MCF 10A (cell line): ENCODE measurements at regions of chr16 and their contacts with region 1.

Region 1: DNA sequence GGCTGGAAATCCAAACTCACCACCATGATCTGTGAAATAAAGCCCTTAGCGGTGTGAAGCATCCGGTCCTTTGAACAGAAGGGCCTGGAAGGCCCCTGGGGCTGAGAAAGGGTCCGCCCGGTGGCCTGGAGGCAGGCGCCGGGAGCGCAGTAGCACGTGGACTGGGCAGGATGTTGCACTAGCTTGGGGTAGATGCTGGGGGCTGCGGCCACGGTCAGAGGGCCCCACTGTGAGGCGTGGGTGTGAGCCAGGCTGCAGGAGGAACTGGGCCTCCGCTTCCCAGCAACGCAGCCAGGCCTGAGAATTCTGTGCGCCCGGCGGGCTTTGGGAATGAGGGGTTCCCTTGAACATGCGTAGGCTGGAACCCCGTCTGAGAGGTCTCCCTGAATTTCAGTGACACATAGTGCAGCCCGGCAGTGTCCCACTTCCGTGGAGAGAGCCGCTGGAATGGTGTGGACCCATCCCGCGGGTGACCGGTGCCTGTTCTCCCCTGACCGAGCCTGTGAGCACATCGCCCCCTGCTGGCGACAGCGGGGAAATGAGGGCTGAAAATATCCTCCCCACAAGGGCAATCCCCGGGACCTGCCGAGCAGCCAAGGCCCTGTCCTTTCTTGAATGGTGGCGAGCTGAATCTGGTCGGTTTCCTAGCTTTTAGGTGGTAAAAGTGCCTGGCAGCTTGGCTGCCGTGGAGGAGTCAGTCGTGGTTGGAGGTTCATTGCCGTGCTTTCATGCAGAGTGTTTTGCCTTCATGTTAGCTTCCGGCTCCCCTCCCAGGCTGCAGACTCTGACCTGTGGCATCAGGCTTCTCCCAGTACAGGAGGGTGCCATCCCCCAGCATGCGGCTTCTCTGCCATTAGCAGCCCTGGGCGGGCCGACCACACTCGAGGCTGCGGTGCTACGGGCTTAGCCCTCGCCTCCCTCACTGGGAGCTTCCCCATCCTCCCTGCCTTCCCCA is 43.8 kb downstream of the DNAJA2 start:
- DNase-seq: peak; percentile 57
- H3K4me3 Mint-ChIP-seq: no peak overlapping the region
- H3K27ac Mint-ChIP-seq: no peak overlapping the region
- H3K4me1 Mint-ChIP-seq: no peaks in the 10 kb centered on the region
- H3K27me3 Mint-ChIP-seq: no peaks in the 10 kb centered on the region
- CTCF ChIP-seq: peak; percentile 87

Region 2: GRCh38 chr16:46883690-46884512 is 45.8 kb before region 1 on chr16 and contains the start of gene GPT2:
- CTCF ChIA-PET with region 1: interaction called, 10 read pairs
- POLR2A ChIA-PET with region 1: interaction called, 5 read pairs
- intact Hi-C with region 1: no loop called
- DNase-seq: peak; percentile 97
- H3K4me3 Mint-ChIP-seq: peak within 1 kb of the TSS; percentile 73
- H3K27ac Mint-ChIP-seq: peak within 1 kb of the TSS; percentile 90
- H3K4me1 Mint-ChIP-seq: peaks cover 26% of the 10 kb centered on the region
- H3K27me3 Mint-ChIP-seq: no peaks in the 10 kb centered on the region
- CTCF ChIP-seq: peak; percentile 24
- total RNA-seq, gene GPT2: 44.7 and 60.6 TPM in 2 replicates

Region 3: DNA sequence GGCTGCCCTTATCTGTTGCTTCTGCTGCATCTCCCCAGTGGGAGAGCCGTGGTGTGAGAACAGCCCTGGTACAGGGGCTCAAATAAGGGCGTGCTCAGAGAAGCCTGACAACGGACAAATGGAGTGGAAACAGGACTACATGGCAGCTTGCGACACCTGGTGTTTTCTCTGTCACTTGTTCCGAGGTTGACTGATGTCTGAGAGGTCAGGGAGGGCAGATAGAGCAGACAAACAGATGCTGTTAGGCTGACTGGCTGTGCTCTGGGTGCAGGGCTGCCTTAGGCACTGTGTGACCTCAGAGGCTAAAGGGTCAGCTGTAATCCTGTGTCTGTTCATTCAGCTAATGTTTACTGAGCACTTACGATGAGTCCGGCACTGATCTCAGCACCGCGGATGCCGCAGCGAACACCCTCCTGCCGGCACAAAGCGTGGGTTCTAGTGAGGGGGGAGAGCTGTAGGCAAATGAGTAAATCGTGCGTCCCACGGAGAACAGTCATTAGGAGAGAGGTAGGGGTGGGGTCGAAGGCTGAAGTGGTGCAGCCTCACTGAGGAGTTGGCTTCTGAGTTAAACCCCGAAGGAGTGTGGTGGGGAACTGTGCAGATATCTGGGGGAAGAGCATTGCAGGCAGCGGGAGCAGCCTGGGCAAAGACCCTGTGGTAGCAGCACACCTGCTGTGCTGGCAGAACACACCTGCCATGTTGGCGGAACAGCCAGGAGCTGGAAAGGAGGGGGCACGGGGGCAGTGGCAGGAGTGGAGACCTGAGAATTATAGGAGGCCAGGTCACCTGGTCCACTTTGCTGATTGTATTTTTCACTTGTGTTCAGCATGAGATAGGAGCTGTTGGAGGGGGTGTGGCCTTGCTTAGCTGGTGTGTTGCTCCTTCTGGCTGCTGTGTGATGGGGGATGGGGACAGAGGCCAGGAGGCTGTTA is 10.5 kb before region 1 on chr16:
- CTCF ChIA-PET with region 1: interaction called, 36 read pairs
- POLR2A ChIA-PET with region 1: no interaction called
- intact Hi-C with region 1: no loop called
- DNase-seq: no peak
- H3K4me3 Mint-ChIP-seq: no peak overlapping the region
- H3K27ac Mint-ChIP-seq: peak overlapping the region; percentile 8
- H3K4me1 Mint-ChIP-seq: no peaks in the 10 kb centered on the region
- H3K27me3 Mint-ChIP-seq: no peaks in the 10 kb centered on the region
- CTCF ChIP-seq: no peak

Region 4: DNA sequence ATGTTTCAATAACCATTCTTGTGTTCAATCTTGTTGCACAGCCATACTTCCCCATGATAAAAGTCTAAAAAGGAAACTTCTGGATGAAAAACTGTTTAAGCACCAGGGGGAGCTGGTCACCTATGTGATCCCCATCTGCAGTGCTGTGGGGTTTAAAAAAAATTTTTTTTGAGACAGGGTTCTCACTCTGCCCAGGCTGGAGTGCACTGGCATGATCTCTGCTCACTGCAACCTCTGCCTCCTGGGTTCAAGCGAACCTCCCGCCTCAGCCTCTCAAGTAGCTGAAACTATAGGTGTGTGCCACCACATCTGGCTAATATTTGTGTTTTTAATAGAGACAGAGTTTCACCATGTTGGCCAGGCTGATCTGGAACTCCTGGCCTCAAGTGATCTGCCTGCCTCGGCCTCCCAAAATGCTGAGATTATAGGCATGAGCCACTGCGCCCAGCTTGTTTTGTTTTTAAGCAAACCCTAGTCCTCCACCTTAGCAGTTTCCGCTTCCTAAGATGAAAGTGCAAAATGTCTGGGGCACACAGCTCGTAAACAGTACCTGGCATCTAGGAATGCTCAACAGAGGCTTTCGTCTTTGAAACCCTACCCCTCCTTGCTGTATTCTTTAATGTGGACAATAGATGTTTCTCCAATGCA is 18.4 kb after region 1 on chr16:
- CTCF ChIA-PET with region 1: interaction called, 35 read pairs
- POLR2A ChIA-PET with region 1: no interaction called
- intact Hi-C with region 1: no loop called
- DNase-seq: peak; percentile 57
- H3K4me3 Mint-ChIP-seq: no peak overlapping the region
- H3K27ac Mint-ChIP-seq: no peak overlapping the region
- H3K4me1 Mint-ChIP-seq: no peaks in the 10 kb centered on the region
- H3K27me3 Mint-ChIP-seq: no peaks in the 10 kb centered on the region
- CTCF ChIP-seq: peak; percentile 61

Region 5: DNA sequence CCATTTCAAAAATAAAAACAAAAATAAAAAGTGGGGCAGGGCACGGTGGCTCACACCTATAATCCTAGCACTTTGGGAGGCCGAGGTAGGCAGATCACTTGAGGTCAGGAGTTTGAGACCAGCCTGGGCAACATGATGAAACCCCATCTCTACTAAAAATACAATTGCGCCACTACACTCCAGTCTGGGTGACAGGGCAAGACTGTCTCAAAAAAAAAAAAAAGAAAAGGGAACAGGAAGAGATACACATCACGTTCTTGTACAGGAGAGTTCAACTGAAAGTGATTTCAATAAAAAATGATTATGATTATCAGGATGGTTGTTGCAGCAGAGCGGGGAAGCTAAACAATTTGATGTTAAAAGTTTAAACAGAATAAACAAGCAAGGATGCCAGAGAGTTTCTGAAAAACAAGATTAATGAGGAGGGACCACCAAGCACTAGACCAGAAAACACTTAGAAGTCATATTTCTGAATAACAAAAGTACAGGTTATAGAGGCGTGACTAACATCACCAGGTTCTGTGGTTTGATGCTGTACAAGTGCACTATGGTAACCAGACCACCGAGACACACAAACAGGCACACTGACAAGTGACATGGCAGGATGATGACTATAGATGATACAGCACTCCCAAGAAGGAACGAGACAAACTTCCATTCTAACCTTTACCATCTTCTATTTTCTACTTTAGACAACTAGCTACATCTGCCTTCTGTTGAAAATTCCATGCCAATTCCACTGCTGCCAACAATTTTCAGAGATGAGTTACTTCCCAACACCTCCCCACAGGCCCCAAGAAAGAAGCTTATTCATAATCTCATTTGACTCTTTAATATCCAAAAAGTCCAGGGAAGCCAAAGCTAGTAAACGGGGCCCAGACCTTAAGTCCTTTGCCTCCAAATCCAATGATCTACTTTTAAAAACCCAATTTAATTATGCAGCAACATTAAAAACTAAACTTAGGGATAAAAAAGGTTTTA is 32.0 kb after region 1 on chr16:
- CTCF ChIA-PET with region 1: interaction called, 13 read pairs
- POLR2A ChIA-PET with region 1: no interaction called
- intact Hi-C with region 1: no loop called
- DNase-seq: no peak
- H3K4me3 Mint-ChIP-seq: no peak overlapping the region
- H3K27ac Mint-ChIP-seq: no peak overlapping the region
- H3K4me1 Mint-ChIP-seq: peaks cover 6% of the 10 kb centered on the region
- H3K27me3 Mint-ChIP-seq: no peaks in the 10 kb centered on the region
- CTCF ChIP-seq: no peak

Region 6: GRCh38 chr16:47905771-47906170 is 976.1 kb after region 1 on chr16:
- CTCF ChIA-PET with region 1: no interaction called
- POLR2A ChIA-PET with region 1: no interaction called
- intact Hi-C with region 1: no loop called
- DNase-seq: peak; percentile 19
- H3K4me3 Mint-ChIP-seq: no peak overlapping the region
- H3K27ac Mint-ChIP-seq: no peak overlapping the region
- H3K4me1 Mint-ChIP-seq: no peaks in the 10 kb centered on the region
- H3K27me3 Mint-ChIP-seq: no peaks in the 10 kb centered on the region
- CTCF ChIP-seq: no peak